Activated CD4-positive, alpha-beta T cell treated with anti-CD3 and anti-CD28 coated beads, Interleukin-2, amount 10 ng/mL, durations not matched to agents 24 days and 14 days (primary cell): ENCODE measurements at regions of chr4 and their contacts with region 1.

Region 1: GRCh38 chr4:139453371-139454110 is 380 bp upstream of the RAB33B start:
- DNase-seq: peak; percentile 99
- H3K4me3 Mint-ChIP-seq: peak overlapping the region; percentile 92
- H3K27ac Mint-ChIP-seq: peak overlapping the region; percentile 96
- H3K4me1 Mint-ChIP-seq: peaks cover 49% of the 10 kb centered on the region
- H3K27me3 Mint-ChIP-seq: no peaks in the 10 kb centered on the region

Region 2: DNA sequence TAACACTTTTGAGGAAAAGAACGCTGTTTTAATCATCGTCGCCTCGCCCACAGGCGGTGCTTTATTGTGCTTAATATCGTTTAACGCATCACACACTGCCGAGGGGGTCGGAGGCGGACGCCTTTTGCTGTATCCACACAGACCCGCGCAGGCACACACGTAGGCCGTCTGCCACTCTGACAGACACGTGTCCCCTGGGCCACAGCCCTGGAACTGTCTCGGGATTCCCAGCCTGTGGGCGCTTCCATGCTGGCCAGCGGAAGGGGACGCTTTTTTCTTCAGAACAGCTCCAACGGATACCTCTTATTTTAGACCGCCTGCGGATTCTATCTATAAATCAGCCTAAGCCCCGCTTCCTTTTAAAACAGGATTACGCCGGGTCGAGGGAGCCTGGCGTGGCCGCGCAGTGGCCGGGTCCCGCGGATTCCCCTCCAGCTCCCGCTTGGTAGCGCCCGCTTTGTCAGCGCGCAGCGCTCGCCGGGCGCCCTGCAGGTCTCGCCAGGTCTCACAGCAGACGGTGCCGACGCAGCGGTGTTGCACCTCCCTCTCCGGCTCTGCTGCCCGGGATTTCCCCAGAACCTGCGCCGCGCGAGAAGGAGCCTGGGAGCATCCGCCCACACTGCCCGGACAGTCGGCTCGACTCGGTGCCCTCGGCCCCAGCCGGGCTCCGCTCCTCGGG is 438.1 kb before region 1 on chr4 and contains the start of gene NOCT:
- intact Hi-C with region 1: loop called (anchors 2 kb)
- DNase-seq: peak; percentile 97
- H3K4me3 Mint-ChIP-seq: peak within 1 kb of the TSS; percentile 93
- H3K27ac Mint-ChIP-seq: peak within 1 kb of the TSS; percentile 96
- H3K4me1 Mint-ChIP-seq: peaks cover 35% of the 10 kb centered on the region
- H3K27me3 Mint-ChIP-seq: no peaks in the 10 kb centered on the region
- total RNA-seq, gene NOCT: 21.3 and 25.3 TPM in 2 replicates

Region 3: GRCh38 chr4:139301113-139301820 is 152.3 kb before region 1 on chr4 and contains the start of gene NAA15:
- intact Hi-C with region 1: loop called (anchors 1 kb)
- DNase-seq: peak; percentile 99
- H3K4me3 Mint-ChIP-seq: peak within 1 kb of the TSS; percentile 99
- H3K27ac Mint-ChIP-seq: peak within 1 kb of the TSS; percentile 100
- H3K4me1 Mint-ChIP-seq: peaks cover 52% of the 10 kb centered on the region
- H3K27me3 Mint-ChIP-seq: no peaks in the 10 kb centered on the region
- total RNA-seq, gene NAA15: 114 and 115 TPM in 2 replicates

Region 4: DNA sequence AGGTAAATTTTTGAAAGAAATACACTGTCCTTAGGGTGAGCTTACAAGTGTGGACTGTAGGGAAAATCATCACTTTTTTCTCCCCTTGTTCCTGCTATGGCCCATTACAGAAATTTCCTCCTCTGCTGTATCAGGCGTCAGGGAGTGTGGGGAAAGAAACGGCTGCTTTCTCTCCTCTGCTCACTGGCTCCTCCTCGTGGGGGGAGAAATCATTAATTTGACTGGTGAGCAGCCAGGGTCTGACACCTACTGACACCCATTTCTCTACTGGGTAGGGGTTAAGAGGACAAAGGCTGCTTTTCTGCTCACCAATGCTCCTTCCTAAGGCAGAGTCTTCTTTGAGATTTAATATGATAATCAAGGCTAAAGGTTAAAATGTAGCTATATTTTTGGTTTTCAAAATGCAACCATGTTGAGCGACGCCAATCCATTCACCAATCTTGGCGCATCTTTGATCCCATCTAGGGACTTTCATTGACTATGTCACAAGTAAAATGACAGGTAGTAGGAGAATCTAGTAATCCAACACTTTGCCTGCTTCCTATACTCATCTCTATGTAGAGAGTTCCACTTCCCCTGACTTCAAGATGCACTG is 77.4 kb after region 1 on chr4:
- intact Hi-C with region 1: loop called (anchors 2 kb)
- DNase-seq: peak; percentile 89
- H3K4me3 Mint-ChIP-seq: no peak overlapping the region
- H3K27ac Mint-ChIP-seq: no peak overlapping the region
- H3K4me1 Mint-ChIP-seq: peaks cover 5% of the 10 kb centered on the region
- H3K27me3 Mint-ChIP-seq: no peaks in the 10 kb centered on the region

Region 5: DNA sequence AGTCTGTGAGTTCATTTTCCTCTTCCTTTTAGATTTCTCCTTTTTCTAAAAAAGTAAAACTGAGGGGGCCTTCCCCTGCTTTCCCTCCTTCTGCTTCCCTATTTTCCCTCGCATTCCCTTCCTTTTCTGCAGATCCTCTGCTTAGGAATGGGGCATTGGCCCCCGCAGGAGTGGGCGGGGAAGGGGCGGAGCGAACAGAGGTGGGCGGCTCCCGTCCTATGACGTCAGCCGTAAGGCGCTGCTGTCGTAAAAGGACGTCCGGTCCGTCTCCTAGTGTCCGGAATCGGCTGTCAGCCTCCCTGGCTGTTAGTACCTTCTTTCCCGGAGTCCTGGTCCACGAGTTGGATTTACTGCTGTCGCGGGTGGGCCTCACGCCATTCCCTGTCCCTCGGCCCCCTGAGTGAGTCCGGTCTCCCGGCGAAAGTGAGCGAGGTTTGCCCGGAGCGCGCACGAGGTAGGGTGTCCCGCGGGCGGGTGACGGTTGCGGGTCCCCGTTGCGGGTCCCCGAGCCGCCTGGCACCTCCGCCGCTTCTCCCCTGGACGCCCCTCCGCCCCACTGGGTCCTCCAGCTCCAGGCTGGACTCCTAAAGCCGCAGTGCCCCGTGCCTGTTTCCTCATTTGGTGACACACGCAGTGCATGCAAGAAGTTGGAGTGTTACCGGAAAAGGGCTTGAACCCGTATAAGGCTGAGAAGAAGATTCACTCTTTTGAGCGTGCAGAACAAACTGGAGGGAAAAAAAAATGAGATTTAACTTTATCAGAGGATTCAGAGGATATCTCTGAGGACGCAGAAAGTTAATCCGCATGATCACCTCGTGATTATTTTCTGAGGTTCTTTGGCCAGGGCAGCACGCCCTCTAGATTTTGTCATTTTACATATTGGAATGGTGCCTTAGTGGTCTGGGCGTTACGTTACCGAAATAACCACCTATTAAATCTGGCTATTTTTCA is 1767.4 kb after region 1 on chr4 and contains the start of gene ZNF330:
- intact Hi-C with region 1: loop called (anchors 5 kb)
- DNase-seq: peak; percentile 97
- H3K4me3 Mint-ChIP-seq: peak within 1 kb of the TSS; percentile 95
- H3K27ac Mint-ChIP-seq: peak within 1 kb of the TSS; percentile 98
- H3K4me1 Mint-ChIP-seq: peaks cover 37% of the 10 kb centered on the region
- H3K27me3 Mint-ChIP-seq: peaks cover 4% of the 10 kb centered on the region
- total RNA-seq, gene ZNF330: 60.2 and 64.6 TPM in 2 replicates